Left cardiac atrium (tissue), 4 donors: ENCODE measurements at regions of chr12 and their contacts with region 1.

Region 1: DNA sequence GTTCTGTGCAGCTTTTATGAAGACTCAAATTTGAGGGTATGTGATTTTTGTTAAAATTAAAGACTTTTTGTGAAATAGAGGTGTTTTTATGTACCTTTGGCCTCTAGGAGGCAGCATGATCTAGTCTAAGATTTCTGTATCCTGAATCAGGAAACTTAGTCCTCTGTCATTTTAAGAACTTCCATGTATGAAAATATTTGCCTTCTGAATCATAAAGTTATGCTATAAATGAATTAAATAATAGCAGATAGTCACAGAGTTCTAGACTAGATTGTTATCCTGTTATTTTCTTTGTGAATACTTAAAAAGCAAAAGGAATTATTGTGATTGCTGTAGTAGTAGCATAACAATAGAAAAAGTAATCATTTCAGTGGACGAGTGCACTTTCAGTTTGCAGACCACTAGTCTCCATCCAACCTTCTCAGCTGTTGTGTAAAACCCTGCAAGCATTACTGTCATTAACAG is 56.3 kb downstream of the FGD4 start:
- DNase-seq: no peak
- ATAC-seq: peak; percentile 61 to 80

Region 2: GRCh38 chr12:32533971-32534590 is 78.4 kb after region 1 on chr12:
- intact Hi-C with region 1: loop called in 1 of 2 experiments (anchors 2 kb)
- DNase-seq: peak; percentile 43
- ATAC-seq: peak; percentile 74 to 94

Region 3: GRCh38 chr12:32659908-32660440 is 204.3 kb after region 1 on chr12:
- intact Hi-C with region 1: loop called in 1 of 2 experiments (anchors 5 kb)
- DNase-seq: no peak
- ATAC-seq: no peak

Region 4: DNA sequence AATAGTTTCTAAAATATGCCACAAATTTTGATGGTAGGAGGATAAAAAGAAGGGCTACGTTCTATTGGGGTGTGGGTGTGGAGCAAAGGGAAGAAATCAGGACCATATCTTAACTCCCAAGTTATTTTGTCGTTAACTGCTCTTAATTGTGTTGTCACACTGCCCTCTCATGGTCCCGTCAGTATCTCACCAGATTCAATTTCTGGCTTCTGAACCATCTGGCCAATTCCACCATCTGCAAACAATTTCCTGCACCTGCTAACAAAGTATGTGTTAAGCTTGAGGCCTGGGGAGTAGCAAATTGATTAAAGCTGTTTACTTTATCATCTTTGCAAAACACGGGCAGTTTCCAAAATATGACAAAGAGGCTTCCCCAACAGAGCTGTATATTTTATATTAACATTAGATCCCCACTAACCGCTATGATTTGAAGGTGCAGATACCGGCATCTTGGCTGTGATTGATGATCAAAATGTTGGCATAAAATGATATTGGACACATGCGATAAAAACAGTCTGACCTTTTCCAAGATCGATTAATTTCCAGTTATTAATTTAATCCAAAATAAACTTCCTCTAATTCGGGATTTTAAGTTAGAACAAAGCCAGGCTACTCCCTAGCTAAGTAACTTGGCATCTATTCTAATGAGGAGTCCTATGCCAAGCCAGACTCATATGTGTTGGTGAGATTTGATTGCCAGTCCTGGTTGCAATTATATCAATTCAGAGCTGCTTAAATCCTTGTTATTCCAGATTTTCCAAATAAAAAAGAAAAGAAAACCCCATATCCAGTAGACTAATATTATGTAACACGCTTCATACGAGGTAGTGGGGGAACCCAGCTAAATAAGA is 216.5 kb after region 1 on chr12:
- intact Hi-C with region 1: loop called in 1 of 2 experiments (anchors 5 kb)
- DNase-seq: no peak
- ATAC-seq: peak; percentile 75 to 89